ENCODE measurements at regions of chr5 and their contacts with region 1.

Region 1: GRCh38 chr5:136424835-136425584 is 59.7 kb upstream of the TRPC7 start:
- DNase-seq: peak; percentile 64
- CTCF ChIP-seq: peak; percentile 84

Region 2: GRCh38 chr5:135869276-135869675 is 555.7 kb before region 1 on chr5:
- in situ Hi-C with region 1: no loop called
- DNase-seq: no peak
- CTCF ChIP-seq: no peak

Region 3: DNA sequence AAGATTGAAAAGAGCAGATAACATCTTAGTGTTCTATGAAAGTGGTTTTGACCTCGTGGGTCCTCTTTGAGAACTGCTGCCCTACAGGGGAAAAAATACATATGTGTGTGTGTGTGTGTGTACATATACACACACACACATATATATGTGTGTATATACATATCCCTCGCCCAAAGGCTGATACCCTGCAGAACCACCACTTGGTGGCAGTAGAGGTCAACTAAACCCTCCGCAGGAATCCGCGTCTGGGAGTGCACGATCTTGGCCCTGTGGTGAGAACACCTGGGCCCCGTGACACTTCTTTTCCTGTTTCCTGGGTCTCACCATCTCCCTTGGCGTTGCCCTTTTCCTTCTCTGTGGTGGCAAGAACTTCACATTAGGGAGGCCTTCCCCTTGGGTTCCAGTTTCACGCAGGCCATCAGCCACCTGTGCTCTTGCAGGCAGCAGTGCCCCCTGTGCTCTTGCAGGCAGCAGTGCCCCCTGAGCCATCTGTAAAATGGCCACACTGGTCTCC is 537.6 kb before region 1 on chr5:
- in situ Hi-C with region 1: loop called (anchors 25 kb)
- DNase-seq: peak; percentile 68
- CTCF ChIP-seq: peak; percentile 89

Region 4: DNA sequence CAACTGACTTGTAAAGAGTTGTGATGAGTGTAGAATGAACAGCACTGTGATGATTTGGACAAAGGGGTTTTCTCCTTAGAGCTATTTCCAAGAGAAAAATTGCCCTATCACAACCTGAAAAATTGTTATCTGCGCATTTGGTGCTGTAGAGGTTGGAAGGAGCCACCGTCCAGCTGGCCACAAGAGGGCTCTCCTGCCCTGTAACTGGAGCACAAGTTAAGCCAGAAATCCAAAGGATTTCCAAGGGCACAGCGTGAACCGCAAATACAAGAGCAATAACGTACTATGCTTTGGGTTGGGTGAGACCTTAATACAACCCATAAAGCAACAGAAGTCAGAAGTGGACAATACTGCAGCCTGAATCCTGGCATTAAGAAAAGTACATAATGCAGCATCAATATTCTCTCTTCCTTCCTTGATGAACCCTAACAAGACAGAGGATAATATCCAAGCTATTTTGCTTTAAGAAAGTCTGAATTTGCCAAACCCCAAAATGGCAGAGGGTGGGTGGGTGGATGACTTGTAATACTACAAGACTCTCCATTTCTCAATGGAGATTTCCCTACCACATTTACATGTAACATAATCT is 175.2 kb before region 1 on chr5:
- in situ Hi-C with region 1: loop called (anchors 25 kb)
- DNase-seq: peak; percentile 27
- CTCF ChIP-seq: peak; percentile 85